Activated CD8-positive, alpha-beta T cell treated with anti-CD3 and anti-CD28 coated beads for 36 hours (primary cell): ENCODE measurements at regions of chr12 and their contacts with region 1.

Region 1: DNA sequence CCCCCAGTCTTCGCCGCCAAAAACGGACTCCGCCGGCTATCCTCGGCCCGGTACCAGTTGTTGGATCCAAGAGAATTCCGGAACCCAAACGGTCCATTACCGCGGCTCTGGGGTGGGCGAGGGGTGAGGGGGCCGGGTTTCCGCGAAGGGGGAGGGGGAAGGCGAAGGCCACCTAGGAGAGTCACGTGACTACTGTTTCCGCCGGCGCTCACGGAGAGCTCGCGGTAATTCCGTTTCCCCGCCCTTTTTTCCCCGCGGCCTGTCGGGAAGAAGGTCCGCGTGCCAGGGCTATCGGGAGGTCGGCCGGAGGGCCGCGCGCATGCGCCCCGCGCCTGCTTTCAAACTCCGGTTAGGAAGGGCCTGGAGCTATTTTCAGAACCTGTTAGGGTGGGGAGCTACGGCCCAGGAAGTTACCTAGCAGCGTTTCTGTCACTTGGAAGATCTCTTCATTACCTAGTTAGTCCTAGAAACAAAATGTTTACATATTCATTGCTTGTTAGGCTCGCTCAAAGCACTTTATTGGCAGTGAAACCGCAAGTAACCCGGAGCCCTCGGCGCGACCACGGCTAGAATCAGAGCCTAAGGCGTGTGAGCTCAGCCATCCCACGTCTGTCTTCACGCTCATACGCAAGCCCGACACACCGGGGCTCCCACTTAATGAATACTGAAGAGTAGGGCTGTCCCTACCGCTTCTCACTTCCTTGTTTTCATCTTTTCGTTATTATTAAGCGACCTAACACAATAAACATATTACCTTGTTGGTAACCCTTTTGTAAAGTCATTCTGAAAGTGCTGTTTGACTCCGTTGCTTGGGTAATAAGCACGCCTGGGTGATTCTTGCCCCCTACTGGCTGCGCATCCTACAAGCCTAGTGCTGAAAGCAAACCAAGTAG is 624 bp upstream of the SBNO1 start:
- DNase-seq: peak; percentile 98
- ATAC-seq: peak; percentile 76
- H3K4me3 Mint-ChIP-seq: peak overlapping the region; percentile 96
- H3K27ac Mint-ChIP-seq: peak overlapping the region; percentile 97
- H3K4me1 Mint-ChIP-seq: peaks cover 11% of the 10 kb centered on the region
- H3K27me3 Mint-ChIP-seq: no peaks in the 10 kb centered on the region
- CTCF ChIP-seq: peak; percentile 86

Region 2: GRCh38 chr12:123354600-123354999 is 10.7 kb before region 1 on chr12:
- CTCF ChIA-PET with region 1: interaction called, 4 read pairs
- POLR2A ChIA-PET with region 1: interaction called, 13 read pairs
- intact Hi-C with region 1: no loop called
- DNase-seq: no peak
- ATAC-seq: peak; percentile 58
- H3K4me3 Mint-ChIP-seq: no peak overlapping the region
- H3K27ac Mint-ChIP-seq: peak overlapping the region; percentile 75
- H3K4me1 Mint-ChIP-seq: peaks cover 55% of the 10 kb centered on the region
- H3K27me3 Mint-ChIP-seq: no peaks in the 10 kb centered on the region
- CTCF ChIP-seq: no peak

Region 3: GRCh38 chr12:123388177-123388947 is 23.1 kb after region 1 on chr12:
- CTCF ChIA-PET with region 1: interaction called, 35 read pairs
- POLR2A ChIA-PET with region 1: interaction called, 26 read pairs
- intact Hi-C with region 1: no loop called
- DNase-seq: peak; percentile 85
- ATAC-seq: peak; percentile 44
- H3K4me3 Mint-ChIP-seq: peak overlapping the region; percentile 77
- H3K27ac Mint-ChIP-seq: peak overlapping the region; percentile 85
- H3K4me1 Mint-ChIP-seq: peaks cover 35% of the 10 kb centered on the region
- H3K27me3 Mint-ChIP-seq: no peaks in the 10 kb centered on the region
- CTCF ChIP-seq: no peak

Region 4: DNA sequence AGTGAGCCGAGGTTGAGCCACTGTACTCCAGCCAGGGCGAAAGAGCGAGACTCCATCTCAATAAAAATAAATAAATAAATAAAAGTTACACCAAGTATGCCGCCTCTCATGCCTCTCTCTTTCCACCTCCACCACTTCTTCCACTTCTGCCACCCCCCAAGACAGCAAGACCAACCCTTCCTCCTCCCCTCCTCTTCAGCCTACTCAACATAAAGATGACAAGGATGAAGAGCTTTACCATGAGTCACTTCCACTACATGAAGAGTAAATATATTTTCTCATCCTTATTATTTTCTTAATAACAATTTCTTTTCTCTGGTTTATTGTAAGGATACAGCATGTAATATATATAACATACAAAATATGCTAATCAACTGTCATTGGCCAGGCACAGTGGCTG is 215.5 kb after region 1 on chr12:
- CTCF ChIA-PET with region 1: interaction called, 10 read pairs
- POLR2A ChIA-PET with region 1: no interaction called
- intact Hi-C with region 1: no loop called
- DNase-seq: no peak
- ATAC-seq: no peak
- H3K4me3 Mint-ChIP-seq: no peak overlapping the region
- H3K27ac Mint-ChIP-seq: no peak overlapping the region
- H3K4me1 Mint-ChIP-seq: peaks cover 18% of the 10 kb centered on the region
- H3K27me3 Mint-ChIP-seq: no peaks in the 10 kb centered on the region
- CTCF ChIP-seq: no peak